ENCODE measurements at regions of chr16 and their contacts with region 1.

Region 1: GRCh38 chr16:2147981-2148671 is at the start of gene RAB26:
- DNase-seq: peak; percentile 69
- H3K4me3 ChIP-seq: peak within 1 kb of the TSS; percentile 66
- H3K27ac ChIP-seq: no peak within 1 kb of the TSS
- H3K4me1 ChIP-seq: peaks cover 18% of the 10 kb centered on the region
- H3K27me3 ChIP-seq: no peaks in the 10 kb centered on the region
- total RNA-seq, gene RAB26: not detected in 2 replicates

Region 2: GRCh38 chr16:2023098-2023925 is 124.8 kb before region 1 on chr16:
- in situ Hi-C with region 1: loop called (anchors 10 kb)
- DNase-seq: peak; percentile 92
- H3K4me3 ChIP-seq: peak overlapping the region; percentile 56
- H3K27ac ChIP-seq: no peak overlapping the region
- H3K4me1 ChIP-seq: no peaks in the 10 kb centered on the region
- H3K27me3 ChIP-seq: no peaks in the 10 kb centered on the region; the same call in 1 of the 2 replicates

Measured in GM23248 (cell line).